Naive thymus-derived CD4-positive, alpha-beta T cell (primary cell): ENCODE measurements at regions of chr5 and their contacts with region 1.

Region 1: DNA sequence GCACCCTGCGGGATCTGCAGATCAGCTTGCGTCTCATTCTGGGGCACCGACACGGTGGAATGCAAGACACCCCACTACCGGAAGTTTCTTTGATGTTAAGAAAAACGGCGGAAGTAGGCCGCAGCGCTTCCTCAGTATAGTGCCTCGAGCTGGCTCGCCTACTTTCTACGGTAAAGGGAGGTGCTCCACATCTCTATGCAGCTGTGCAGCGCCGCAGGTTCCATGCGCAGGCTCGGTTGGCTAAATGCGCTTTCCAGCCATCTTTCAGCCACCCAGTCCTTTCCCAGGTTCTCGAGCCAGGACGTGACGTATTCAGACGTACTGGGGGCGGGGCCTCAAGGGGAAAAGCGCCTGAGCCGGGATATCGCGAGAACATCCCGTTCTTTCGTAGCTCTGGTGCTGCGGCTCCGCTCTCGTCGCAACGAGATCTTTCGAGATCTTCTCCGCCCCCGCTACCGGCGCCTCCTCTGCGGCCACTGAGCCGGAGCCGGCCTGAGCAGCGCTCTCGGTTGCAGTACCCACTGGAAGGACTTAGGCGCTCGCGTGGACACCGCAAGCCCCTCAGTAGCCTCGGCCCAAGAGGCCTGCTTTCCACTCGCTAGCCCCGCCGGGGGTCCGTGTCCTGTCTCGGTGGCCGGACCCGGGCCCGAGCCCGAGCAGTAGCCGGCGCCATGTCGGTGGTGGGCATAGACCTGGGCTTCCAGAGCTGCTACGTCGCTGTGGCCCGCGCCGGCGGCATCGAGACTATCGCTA is at the start of gene HSPA4:
- DNase-seq: peak; percentile 86 to 99 (median 98)
- ATAC-seq: peak; percentile 91
- H3K4me3 ChIP-seq: peak within 1 kb of the TSS; percentile 92
- H3K4me3 Mint-ChIP-seq: peak within 1 kb of the TSS; percentile 91 to 99 (median 98)
- H3K27ac ChIP-seq: peak within 1 kb of the TSS; percentile 98
- H3K27ac Mint-ChIP-seq: peak within 1 kb of the TSS; percentile 99 to 100 (median 100)
- H3K4me1 ChIP-seq: peaks cover 17 to 19% of the 10 kb centered on the region in 2 donors
- H3K4me1 Mint-ChIP-seq: peaks cover 31 to 70% (median 52%) of the 10 kb centered on the region in 7 donors
- H3K27me3 ChIP-seq: no peaks in the 10 kb centered on the region
- H3K27me3 Mint-ChIP-seq: no peaks in the 10 kb centered on the region
- total RNA-seq, gene HSPA4: 42.1 to 103 (median 50.0) TPM

Region 2: DNA sequence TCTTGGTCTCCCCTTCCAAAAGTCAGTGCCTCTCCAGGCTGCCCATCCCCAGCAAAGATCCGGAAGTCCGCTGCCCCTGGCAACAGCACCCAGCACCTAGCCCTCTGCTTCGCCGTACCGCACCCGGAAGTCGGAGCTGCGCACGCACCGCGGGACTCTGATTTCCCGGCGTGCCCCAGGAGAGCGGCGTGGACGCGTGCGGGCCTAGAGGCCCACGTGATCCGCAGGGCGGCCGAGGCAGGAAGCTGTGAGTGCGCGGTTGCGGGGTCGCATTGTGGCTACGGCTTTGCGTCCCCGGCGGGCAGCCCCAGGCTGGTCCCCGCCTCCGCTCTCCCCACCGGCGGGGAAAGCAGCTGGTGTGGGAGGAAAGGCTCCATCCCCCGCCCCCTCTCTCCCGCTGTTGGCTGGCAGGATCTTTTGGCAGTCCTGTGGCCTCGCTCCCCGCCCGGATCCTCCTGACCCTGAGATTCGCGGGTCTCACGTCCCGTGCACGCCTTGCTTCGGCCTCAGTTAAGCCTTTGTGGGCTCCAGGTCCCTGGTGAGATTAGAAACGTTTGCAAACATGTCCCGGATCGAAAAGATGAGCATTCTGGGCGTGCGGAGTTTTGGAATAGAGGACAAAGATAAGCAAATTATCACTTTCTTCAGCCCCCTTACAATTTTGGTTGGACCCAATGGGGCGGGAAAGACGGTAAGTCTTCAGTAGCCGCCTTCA is 494.8 kb before region 1 on chr5 and contains the start of gene RAD50:
- CTCF ChIA-PET with region 1: no interaction called
- POLR2A ChIA-PET with region 1: interaction called, 6 read pairs
- intact Hi-C with region 1: loop called (anchors 5 to 10 kb)
- DNase-seq: peak; percentile 81 to 92 (median 90)
- ATAC-seq: peak; percentile 97
- H3K4me3 ChIP-seq: peak within 1 kb of the TSS; percentile 78
- H3K4me3 Mint-ChIP-seq: peak within 1 kb of the TSS; percentile 90 to 99 (median 96)
- H3K27ac ChIP-seq: peak within 1 kb of the TSS; percentile 76
- H3K27ac Mint-ChIP-seq: peak within 1 kb of the TSS; percentile 90 to 98 (median 97)
- H3K4me1 ChIP-seq: peaks cover 5 to 14% of the 10 kb centered on the region in 2 donors
- H3K4me1 Mint-ChIP-seq: peaks cover 10 to 37% (median 29%) of the 10 kb centered on the region in 7 donors
- H3K27me3 ChIP-seq: no peaks in the 10 kb centered on the region
- H3K27me3 Mint-ChIP-seq: no peaks in the 10 kb centered on the region
- total RNA-seq, gene RAD50: 18.0 to 35.4 (median 32.2) TPM

Region 3: DNA sequence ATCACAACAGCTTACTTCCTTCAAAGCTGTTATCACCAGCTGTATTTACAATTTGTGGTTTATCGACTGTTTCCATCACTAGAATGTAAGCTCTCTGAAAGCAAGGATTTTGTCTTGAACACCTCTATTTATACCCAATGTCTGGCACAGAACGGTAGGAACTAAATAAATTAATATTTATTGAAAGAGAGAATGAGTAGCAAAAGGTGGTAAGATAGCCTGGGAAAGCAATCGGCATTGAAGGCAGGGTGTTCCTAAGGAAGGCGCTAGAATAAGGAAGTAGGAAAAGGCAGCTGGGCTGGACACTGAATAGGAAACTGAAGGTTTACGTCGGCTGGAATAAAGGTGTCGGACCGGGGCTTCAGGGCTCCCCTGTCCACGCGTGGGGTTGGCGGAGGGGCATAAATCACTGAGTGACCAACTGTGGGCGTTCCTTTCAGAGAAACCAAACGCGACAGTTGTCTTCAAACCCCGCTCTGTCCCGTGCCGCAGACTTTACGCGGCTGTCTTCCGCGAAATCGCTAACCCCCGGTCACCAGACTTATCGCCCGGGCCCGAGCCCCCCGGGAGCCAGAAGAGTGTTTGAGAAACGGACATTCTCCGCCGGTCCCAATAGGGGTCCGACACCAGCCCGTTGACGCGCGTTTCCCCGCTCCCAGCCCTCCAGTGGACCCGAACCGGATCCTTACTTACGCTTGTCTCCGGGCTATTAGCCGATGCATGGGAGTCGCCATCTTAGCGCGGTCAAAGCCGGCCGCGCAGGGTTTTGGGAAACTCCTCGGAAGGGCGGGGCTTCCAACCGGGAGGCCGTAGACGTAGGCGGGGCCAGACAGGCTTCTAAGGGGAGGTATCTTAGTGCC is 25.7 kb before region 1 on chr5 and contains the start of gene ZCCHC10:
- CTCF ChIA-PET with region 1: interaction called, 3 read pairs
- POLR2A ChIA-PET with region 1: interaction called, 15 read pairs
- intact Hi-C with region 1: loop called (anchors 1 kb)
- DNase-seq: peak; percentile 75 to 90 (median 84)
- ATAC-seq: peak; percentile 100
- H3K4me3 ChIP-seq: peak within 1 kb of the TSS; percentile 99
- H3K4me3 Mint-ChIP-seq: peak within 1 kb of the TSS; percentile 92 to 98 (median 94)
- H3K27ac ChIP-seq: peak within 1 kb of the TSS; percentile 96
- H3K27ac Mint-ChIP-seq: peak within 1 kb of the TSS; percentile 85 to 98 (median 94)
- H3K4me1 ChIP-seq: peaks cover 4% of the 10 kb centered on the region in 2 donors
- H3K4me1 Mint-ChIP-seq: peaks cover 14 to 37% (median 26%) of the 10 kb centered on the region in 7 donors
- H3K27me3 ChIP-seq: no peaks in the 10 kb centered on the region
- H3K27me3 Mint-ChIP-seq: peaks cover 0 to 8% (median 0%) of the 10 kb centered on the region in 5 donors
- total RNA-seq, gene ZCCHC10: 16.0 to 32.9 (median 18.2) TPM